ENCODE measurements at regions of chr3 and their contacts with region 1.

Region 1: GRCh38 chr3:115836944-115837343 is 213.6 kb downstream of the GAP43 start:
- DNase-seq: peak; percentile 82
- H3K4me3 ChIP-seq: no peak overlapping the region
- H3K27ac ChIP-seq: peak overlapping the region; percentile 96
- H3K4me1 ChIP-seq: peaks cover 72% of the 10 kb centered on the region
- H3K27me3 ChIP-seq: no peaks in the 10 kb centered on the region
- CTCF ChIP-seq: peak; percentile 74

Region 2: DNA sequence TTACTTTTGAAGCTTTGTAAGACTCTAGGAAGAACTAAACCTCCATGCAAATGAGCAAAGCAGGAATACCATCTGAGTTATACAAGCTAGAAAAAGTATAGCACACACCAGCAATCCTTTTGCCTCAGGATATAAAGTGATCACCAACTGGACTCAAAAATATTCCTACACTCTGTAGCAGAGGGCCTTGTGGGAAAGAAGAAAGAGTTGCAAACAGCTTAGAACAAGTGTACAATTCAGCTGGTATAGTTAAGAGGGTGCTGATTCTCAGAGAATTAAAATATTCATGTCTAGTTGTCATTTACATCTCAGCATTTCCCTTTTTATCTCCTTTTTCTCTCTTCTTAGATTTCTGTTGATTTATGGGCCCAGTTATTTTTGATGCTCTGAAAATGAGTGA is 34.8 kb after region 1 on chr3:
- CTCF ChIA-PET with region 1: no interaction called
- POLR2A ChIA-PET with region 1: interaction called, 14 read pairs
- intact Hi-C with region 1: no loop called
- DNase-seq: no peak
- H3K4me3 ChIP-seq: no peak overlapping the region
- H3K27ac ChIP-seq: peak overlapping the region; percentile 66
- H3K4me1 ChIP-seq: peaks cover 65% of the 10 kb centered on the region
- H3K27me3 ChIP-seq: no peaks in the 10 kb centered on the region
- CTCF ChIP-seq: no peak

Region 3: GRCh38 chr3:115922681-115923347 is 85.9 kb after region 1 on chr3:
- CTCF ChIA-PET with region 1: interaction called, 4 read pairs
- POLR2A ChIA-PET with region 1: interaction called, 3 read pairs
- intact Hi-C with region 1: loop called (anchors 1 kb)
- DNase-seq: peak; percentile 86
- H3K4me3 ChIP-seq: no peak overlapping the region
- H3K27ac ChIP-seq: peak overlapping the region; percentile 73
- H3K4me1 ChIP-seq: peaks cover 42% of the 10 kb centered on the region
- H3K27me3 ChIP-seq: no peaks in the 10 kb centered on the region
- CTCF ChIP-seq: peak; percentile 71

Region 4: GRCh38 chr3:116216761-116217160 is 379.8 kb after region 1 on chr3:
- CTCF ChIA-PET with region 1: no interaction called
- POLR2A ChIA-PET with region 1: no interaction called
- intact Hi-C with region 1: no loop called
- DNase-seq: no peak
- H3K4me3 ChIP-seq: no peak overlapping the region
- H3K27ac ChIP-seq: no peak overlapping the region
- H3K4me1 ChIP-seq: no peaks in the 10 kb centered on the region
- H3K27me3 ChIP-seq: no peaks in the 10 kb centered on the region
- CTCF ChIP-seq: no peak

Region 5: GRCh38 chr3:116453666-116454346 is 616.9 kb after region 1 on chr3:
- CTCF ChIA-PET with region 1: no interaction called
- POLR2A ChIA-PET with region 1: no interaction called
- intact Hi-C with region 1: loop called (anchors 10 kb)
- DNase-seq: peak; percentile 37
- H3K4me3 ChIP-seq: no peak overlapping the region
- H3K27ac ChIP-seq: no peak overlapping the region
- H3K4me1 ChIP-seq: no peaks in the 10 kb centered on the region
- H3K27me3 ChIP-seq: no peaks in the 10 kb centered on the region
- CTCF ChIP-seq: peak; percentile 61

Region 6: DNA sequence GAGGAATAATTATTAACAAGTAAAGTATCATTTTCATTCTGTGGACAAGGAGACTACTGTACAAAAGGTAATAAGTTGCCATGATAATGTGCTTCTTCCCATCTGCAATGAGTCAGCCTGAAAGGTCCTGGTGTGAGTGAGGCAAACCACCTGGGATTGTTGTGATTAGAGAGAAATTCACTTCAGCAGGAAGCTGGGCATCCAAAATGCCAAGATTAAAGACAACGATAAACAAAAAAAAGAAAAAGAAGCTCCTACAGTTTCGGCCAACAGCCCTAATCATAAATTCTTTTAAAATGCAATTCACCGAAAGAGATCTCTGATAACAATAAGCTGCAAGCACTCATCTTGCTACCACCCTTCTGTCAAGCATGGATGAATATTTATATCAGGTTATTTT is 1380.4 kb after region 1 on chr3:
- CTCF ChIA-PET with region 1: no interaction called
- POLR2A ChIA-PET with region 1: interaction called, 16 read pairs
- intact Hi-C with region 1: no loop called
- DNase-seq: no peak
- H3K4me3 ChIP-seq: no peak overlapping the region
- H3K27ac ChIP-seq: no peak overlapping the region
- H3K4me1 ChIP-seq: no peaks in the 10 kb centered on the region
- H3K27me3 ChIP-seq: no peaks in the 10 kb centered on the region
- CTCF ChIP-seq: no peak